ENCODE measurements at regions of chr7 and their contacts with region 1.

Region 1: GRCh38 chr7:7681179-7681935 is 37.0 kb downstream of the RPA3 start:
- DNase-seq: peak; percentile 53
- H3K4me3 Mint-ChIP-seq: no peak overlapping the region
- H3K27ac Mint-ChIP-seq: no peak overlapping the region
- H3K4me1 Mint-ChIP-seq: peaks cover 18% of the 10 kb centered on the region
- H3K27me3 Mint-ChIP-seq: no peaks in the 10 kb centered on the region

Region 2: GRCh38 chr7:7751243-7752092 is 70.1 kb after region 1 on chr7:
- CTCF ChIA-PET with region 1: interaction called, 10 read pairs
- DNase-seq: no peak
- H3K4me3 Mint-ChIP-seq: no peak overlapping the region
- H3K27ac Mint-ChIP-seq: no peak overlapping the region
- H3K4me1 Mint-ChIP-seq: peaks cover 5% of the 10 kb centered on the region
- H3K27me3 Mint-ChIP-seq: no peaks in the 10 kb centered on the region

Region 3: DNA sequence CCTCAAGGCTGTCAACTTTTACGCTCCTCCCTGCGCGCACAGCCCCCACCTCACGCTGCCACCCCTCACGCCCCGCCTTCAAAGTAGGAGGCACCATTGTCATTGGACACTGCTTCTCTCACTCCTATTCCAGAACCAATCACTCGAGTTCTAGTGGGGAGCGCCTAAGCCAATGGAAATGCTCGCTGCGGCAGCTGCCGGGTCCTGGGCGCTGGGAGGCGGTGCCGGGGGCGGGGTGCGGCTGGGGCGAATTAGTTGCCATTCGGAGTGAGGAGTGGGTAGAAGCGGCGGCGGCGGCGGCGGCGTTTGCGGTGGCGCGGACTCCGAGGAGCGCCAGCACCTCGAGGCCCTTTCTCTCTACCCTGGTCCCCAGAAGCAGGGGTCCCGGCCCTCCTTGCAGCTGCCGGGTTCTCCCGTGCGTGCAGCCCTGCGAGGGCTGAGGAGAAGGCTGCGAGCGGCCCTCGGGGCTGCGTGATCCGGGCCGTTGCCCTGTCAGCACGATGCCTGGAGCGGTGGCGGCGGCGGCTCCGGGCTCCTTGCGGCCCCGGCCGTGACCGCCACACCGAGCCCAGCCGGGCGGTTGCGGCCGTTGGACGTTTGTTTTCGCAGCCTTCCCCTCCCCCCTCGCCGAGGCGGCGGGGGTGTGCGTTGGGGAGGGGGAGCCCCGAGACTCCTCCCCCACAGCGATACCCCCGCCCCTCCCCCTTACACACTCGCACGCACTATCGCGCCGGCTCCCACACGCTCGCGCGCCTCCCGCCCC is 287.4 kb after region 1 on chr7 and contains the start of gene GLCCI1:
- CTCF ChIA-PET with region 1: interaction called, 17 read pairs
- DNase-seq: peak; percentile 98
- H3K4me3 Mint-ChIP-seq: peak within 1 kb of the TSS; percentile 89
- H3K27ac Mint-ChIP-seq: peak within 1 kb of the TSS; percentile 95
- H3K4me1 Mint-ChIP-seq: peaks cover 27% of the 10 kb centered on the region
- H3K27me3 Mint-ChIP-seq: no peaks in the 10 kb centered on the region

Region 4: GRCh38 chr7:8190119-8190895 is 508.9 kb after region 1 on chr7:
- CTCF ChIA-PET with region 1: interaction called, 23 read pairs
- DNase-seq: peak; percentile 79
- H3K4me3 Mint-ChIP-seq: no peak overlapping the region
- H3K27ac Mint-ChIP-seq: no peak overlapping the region
- H3K4me1 Mint-ChIP-seq: peaks cover 25% of the 10 kb centered on the region
- H3K27me3 Mint-ChIP-seq: peaks cover 2% of the 10 kb centered on the region

Region 5: DNA sequence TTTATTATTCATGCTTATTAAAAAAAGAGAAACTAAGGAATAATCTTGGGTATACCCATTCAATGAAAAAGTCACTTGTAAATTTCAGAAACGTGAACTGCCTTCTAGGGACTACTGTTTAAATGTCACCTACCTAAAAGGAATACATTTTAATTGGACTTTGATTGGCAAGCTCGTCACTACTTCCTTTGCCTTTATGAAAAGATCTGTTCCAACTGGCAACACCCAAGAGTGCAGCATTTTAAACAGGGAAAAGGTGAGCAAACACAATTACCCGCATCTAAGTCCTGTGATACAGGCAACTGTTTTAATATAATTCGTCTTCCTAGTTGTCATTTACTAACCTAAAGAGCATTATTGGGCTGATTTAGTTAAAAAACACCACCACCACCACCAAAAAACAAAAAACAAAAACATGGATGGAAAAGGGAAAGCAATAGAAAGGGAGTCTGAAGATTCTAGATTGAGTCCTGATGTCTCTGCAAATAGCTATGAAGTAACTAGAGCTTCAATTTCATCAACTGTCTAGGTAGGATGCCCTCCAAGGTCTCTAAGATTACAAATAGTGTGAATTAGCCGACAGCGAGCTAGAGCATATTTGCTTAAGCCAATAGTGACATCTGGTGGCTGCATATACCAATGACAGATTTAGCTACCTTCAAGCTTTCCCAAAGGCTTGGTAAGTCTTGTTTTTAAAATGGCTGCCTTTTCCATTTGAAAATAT is 614.4 kb after region 1 on chr7:
- CTCF ChIA-PET with region 1: interaction called, 11 read pairs
- DNase-seq: peak; percentile 40
- H3K4me3 Mint-ChIP-seq: no peak overlapping the region
- H3K27ac Mint-ChIP-seq: no peak overlapping the region
- H3K4me1 Mint-ChIP-seq: peaks cover 2% of the 10 kb centered on the region
- H3K27me3 Mint-ChIP-seq: peaks cover 18% of the 10 kb centered on the region

Measured in activated naive CD4-positive, alpha-beta T cell treated with anti-CD3 and anti-CD28 coated beads, Interleukin-2, amount 10 ng/mL, durations not matched to agents 7 days and 5 days (primary cell).